ENCODE measurements at regions of chr1 and their contacts with region 1.

Region 1: GRCh38 chr1:46547481-46548383 is 3.7 kb downstream of the KNCN start:
- DNase-seq: peak; percentile 29
- H3K4me3 Mint-ChIP-seq: no peak overlapping the region
- H3K27ac Mint-ChIP-seq: no peak overlapping the region
- H3K4me1 Mint-ChIP-seq: peaks cover 11% of the 10 kb centered on the region
- H3K27me3 Mint-ChIP-seq: peaks cover 88% of the 10 kb centered on the region
- CTCF ChIP-seq: peak; percentile 67

Region 2: DNA sequence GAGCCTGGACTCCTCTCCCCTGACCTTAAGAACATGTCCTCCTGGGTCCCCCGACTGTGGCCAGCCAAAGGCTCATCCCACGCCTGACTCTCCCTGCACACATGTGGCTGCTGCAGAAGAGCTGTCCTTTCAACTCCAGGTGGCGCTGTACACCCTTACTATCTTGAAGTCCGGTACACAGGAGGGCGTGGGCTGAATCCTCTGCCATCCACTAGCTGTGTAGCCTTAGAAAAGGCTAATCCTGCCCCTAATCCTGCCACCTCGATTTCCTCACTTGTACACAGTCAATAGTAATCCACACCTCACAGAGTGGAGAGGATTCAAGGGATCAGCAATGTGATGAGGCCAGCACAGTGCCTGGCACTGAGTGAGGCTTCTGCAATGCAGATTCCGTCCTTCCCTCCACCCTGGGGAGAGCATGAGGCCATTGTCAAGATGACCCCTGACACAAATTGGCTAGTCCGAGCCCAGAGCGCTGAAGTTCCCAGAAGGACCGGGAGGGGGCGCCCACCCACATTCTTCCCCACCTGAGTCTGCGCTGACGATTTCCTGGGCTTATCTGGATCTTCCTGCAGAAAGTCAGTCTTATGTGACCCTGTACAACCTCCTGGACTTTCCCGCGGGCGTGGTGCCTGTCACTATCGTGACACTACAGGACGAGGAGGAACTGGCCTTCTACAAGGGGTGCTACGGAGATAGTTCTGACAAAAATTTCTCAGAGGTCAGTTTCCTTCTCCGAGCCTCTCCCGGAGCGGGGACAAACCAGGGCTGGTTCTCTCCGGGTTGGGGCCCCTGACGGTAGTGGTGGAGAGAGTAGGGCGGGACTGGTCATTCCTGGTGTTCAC is 105.2 kb before region 1 on chr1:
- CTCF ChIA-PET with region 1: interaction called, 5 read pairs
- intact Hi-C with region 1: loop called (anchors 1 kb)
- DNase-seq: peak; percentile 85
- H3K4me3 Mint-ChIP-seq: peak overlapping the region; percentile 41
- H3K27ac Mint-ChIP-seq: no peak overlapping the region
- H3K4me1 Mint-ChIP-seq: peaks cover 7% of the 10 kb centered on the region
- H3K27me3 Mint-ChIP-seq: peaks cover 53% of the 10 kb centered on the region
- CTCF ChIP-seq: peak; percentile 98

Region 3: GRCh38 chr1:46537651-46538050 is 10.1 kb before region 1 on chr1:
- CTCF ChIA-PET with region 1: interaction called, 10 read pairs
- intact Hi-C with region 1: no loop called
- DNase-seq: no peak
- H3K4me3 Mint-ChIP-seq: no peak overlapping the region
- H3K27ac Mint-ChIP-seq: no peak overlapping the region
- H3K4me1 Mint-ChIP-seq: no peaks in the 10 kb centered on the region
- H3K27me3 Mint-ChIP-seq: peaks cover 71% of the 10 kb centered on the region
- CTCF ChIP-seq: no peak

Measured in Calu3 (cell line).